ENCODE measurements at regions of chr19 and their contacts with region 1.

Region 1: GRCh38 chr19:38389560-38390281 is 1.2 kb downstream of the SPRED3 start:
- DNase-seq: peak in 1 of 4 donors; percentile 36
- ATAC-seq: no peak
- H3K4me3 ChIP-seq: no peak overlapping the region
- H3K27ac ChIP-seq: peak overlapping the region in 1 of 4 donors; percentile 44
- H3K4me1 ChIP-seq: peaks cover 34% of the 10 kb centered on the region
- H3K27me3 ChIP-seq: peaks cover 0 to 6% of the 10 kb centered on the region in 2 donors
- CTCF ChIP-seq: no peak
- POLR2A ChIP-seq: peak in 1 of 3 donors; percentile 8

Region 2: DNA sequence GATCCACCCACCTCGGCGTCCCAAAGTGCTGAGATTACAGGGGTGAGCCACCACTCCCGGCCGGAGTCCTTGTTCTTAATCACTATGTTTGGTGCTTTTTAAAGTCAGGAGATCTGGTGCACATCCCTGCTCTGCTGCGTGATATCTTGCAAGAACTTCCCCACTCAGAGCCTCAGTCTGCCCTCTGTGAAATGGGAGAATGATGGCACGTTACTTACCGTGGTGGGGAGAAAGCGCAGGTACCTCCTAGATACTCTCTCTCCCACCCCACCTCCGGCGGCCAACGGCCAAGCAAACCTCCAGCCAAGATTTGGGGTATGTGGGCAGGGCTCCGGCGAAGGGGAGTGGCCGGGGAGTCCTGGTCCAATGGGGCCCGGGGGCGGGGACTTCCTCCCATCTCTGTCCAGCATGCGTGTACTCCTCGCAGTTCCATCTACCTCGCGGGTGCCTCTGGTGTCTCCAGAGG is 43.6 kb after region 1 on chr19 and contains the start of gene RYR1:
- intact Hi-C with region 1: no loop called
- DNase-seq: peak in 3 of 4 donors; percentile 38 to 56 (median 45)
- ATAC-seq: no peak
- H3K4me3 ChIP-seq: no peak within 1 kb of the TSS
- H3K27ac ChIP-seq: no peak within 1 kb of the TSS
- H3K4me1 ChIP-seq: no peaks in the 10 kb centered on the region
- H3K27me3 ChIP-seq: peaks cover 0 to 10% of the 10 kb centered on the region in 2 donors
- CTCF ChIP-seq: no peak
- POLR2A ChIP-seq: no peak
- total RNA-seq, gene RYR1: 0.33 to 1.0 TPM

Region 3: GRCh38 chr19:38618590-38619360 is 229.1 kb after region 1 on chr19 and contains the start of gene EIF3K:
- intact Hi-C with region 1: loop called (anchors 10 kb)
- DNase-seq: peak; percentile 99
- ATAC-seq: peak; percentile 98
- H3K4me3 ChIP-seq: peak within 1 kb of the TSS; percentile 47 to 93
- H3K27ac ChIP-seq: peak within 1 kb of the TSS; percentile 59 to 78 (median 76)
- H3K4me1 ChIP-seq: peaks cover 17% of the 10 kb centered on the region
- H3K27me3 ChIP-seq: no peaks in the 10 kb centered on the region
- CTCF ChIP-seq: peak in 1 of 7 experiments; percentile 14
- POLR2A ChIP-seq: peak in 2 of 3 donors; percentile 76 to 77
- total RNA-seq, gene EIF3K: 108 to 169 TPM

Measured in body of pancreas (tissue), 4 donors.